ENCODE measurements at regions of chr13 and their contacts with region 1.

Region 1: DNA sequence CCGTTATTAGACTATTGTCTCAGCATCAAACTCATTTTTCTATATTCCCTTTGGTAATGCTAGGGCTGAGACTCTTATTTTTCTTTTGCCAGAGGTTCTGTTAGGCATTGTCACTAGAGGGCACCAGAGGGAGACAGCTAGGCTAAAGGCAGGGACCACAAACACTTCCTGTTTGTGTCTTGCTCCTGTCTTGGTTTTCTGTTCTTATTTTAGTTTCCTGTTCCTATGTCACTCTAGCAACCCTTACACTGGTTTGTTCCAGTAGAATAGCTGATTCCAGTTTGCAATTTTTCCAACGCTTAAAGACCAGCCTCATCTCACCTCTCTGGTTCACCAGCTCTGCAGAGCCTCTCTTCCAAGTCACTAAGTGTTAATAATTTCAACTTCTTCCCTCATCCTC is 772.0 kb downstream of the DIAPH3 start:
- DNase-seq: peak; percentile 39
- ATAC-seq: peak; percentile 87
- H3K4me3 ChIP-seq: no peak overlapping the region
- H3K27ac ChIP-seq: no peak overlapping the region
- H3K4me1 ChIP-seq: no peaks in the 10 kb centered on the region
- H3K27me3 ChIP-seq: no peaks in the 10 kb centered on the region
- CTCF ChIP-seq: peak; percentile 75
- EP300 ChIP-seq: no peak
- POLR2A ChIP-seq: no peak
- RAD21 ChIP-seq: no peak

Region 2: GRCh38 chr13:59337070-59337469 is 54.6 kb before region 1 on chr13:
- CTCF ChIA-PET with region 1: no interaction called
- POLR2A ChIA-PET with region 1: no interaction called
- in situ Hi-C with region 1: no loop called
- intact Hi-C with region 1: no loop called
- DNase-seq: no peak
- ATAC-seq: no peak
- H3K4me3 ChIP-seq: no peak overlapping the region
- H3K27ac ChIP-seq: no peak overlapping the region
- H3K4me1 ChIP-seq: no peaks in the 10 kb centered on the region
- H3K27me3 ChIP-seq: no peaks in the 10 kb centered on the region
- CTCF ChIP-seq: no peak
- EP300 ChIP-seq: no peak
- POLR2A ChIP-seq: no peak
- RAD21 ChIP-seq: no peak

Region 3: GRCh38 chr13:59409211-59409610 is 17.5 kb after region 1 on chr13:
- CTCF ChIA-PET with region 1: no interaction called
- POLR2A ChIA-PET with region 1: no interaction called
- in situ Hi-C with region 1: no loop called
- intact Hi-C with region 1: no loop called
- DNase-seq: no peak
- ATAC-seq: no peak
- H3K4me3 ChIP-seq: no peak overlapping the region
- H3K27ac ChIP-seq: no peak overlapping the region
- H3K4me1 ChIP-seq: no peaks in the 10 kb centered on the region
- H3K27me3 ChIP-seq: no peaks in the 10 kb centered on the region; a peak in 1 of 5 replicates
- CTCF ChIP-seq: no peak
- EP300 ChIP-seq: no peak
- POLR2A ChIP-seq: no peak
- RAD21 ChIP-seq: no peak

Region 4: GRCh38 chr13:59435024-59435423 is 43.3 kb after region 1 on chr13:
- CTCF ChIA-PET with region 1: no interaction called
- POLR2A ChIA-PET with region 1: no interaction called
- in situ Hi-C with region 1: no loop called
- intact Hi-C with region 1: no loop called
- DNase-seq: no peak
- ATAC-seq: no peak
- H3K4me3 ChIP-seq: no peak overlapping the region
- H3K27ac ChIP-seq: no peak overlapping the region
- H3K4me1 ChIP-seq: no peaks in the 10 kb centered on the region
- H3K27me3 ChIP-seq: no peaks in the 10 kb centered on the region
- CTCF ChIP-seq: no peak
- EP300 ChIP-seq: no peak
- POLR2A ChIP-seq: no peak
- RAD21 ChIP-seq: no peak

Region 5: DNA sequence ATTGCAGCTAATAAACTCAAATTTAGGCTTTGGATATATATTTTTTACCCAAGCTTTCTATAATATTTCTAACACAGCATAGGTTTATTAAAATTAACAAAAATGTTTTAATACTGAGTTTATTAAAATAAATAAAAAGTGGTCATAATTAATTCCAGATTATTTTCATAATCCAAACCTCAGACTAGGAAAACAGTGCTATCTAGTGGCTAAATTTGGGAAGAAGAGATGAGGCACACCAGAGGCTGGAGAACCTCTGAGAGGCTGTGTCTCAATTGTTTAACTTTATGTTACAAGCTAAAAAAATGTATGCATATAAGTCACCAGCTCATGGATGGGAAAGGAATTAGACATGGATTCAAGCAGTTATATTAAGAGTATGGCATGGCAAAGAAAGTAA is 379.6 kb after region 1 on chr13:
- CTCF ChIA-PET with region 1: no interaction called
- POLR2A ChIA-PET with region 1: no interaction called
- in situ Hi-C with region 1: no loop called
- intact Hi-C with region 1: loop called (anchors 10 kb)
- DNase-seq: peak; percentile 4
- ATAC-seq: no peak
- H3K4me3 ChIP-seq: no peak overlapping the region
- H3K27ac ChIP-seq: no peak overlapping the region
- H3K4me1 ChIP-seq: no peaks in the 10 kb centered on the region; the same call in 1 of the 2 replicates
- H3K27me3 ChIP-seq: no peaks in the 10 kb centered on the region
- CTCF ChIP-seq: peak; percentile 57
- EP300 ChIP-seq: no peak
- POLR2A ChIP-seq: no peak
- RAD21 ChIP-seq: no peak

Region 6: DNA sequence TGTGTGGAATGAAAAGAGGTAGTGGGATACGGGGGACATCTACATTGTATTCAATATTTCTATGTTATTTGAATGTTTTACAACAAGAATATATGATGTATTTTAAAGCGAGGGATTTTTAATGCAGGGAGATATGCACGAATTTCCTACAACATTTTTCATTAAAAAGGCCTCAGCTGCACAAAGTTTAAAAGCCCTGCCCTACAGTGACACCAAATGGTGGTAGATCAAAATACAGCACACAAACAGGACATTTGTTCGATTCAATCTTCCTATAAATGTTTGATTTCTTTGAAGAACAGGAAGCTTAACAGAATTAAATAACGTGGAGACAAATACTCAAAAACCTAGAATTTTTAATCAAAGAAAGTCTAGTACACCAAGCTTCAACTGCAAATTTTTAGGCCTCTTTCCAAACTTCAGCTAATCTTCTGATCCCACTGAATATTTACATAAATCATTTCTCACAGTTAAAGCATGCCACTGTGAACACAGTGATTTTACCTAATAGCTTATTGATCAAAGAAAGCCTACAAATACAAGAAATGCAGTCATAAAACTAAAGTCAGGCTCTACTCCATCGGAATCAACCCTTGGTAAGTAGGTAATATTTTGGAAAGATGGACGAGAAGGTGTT is 514.8 kb after region 1 on chr13:
- CTCF ChIA-PET with region 1: no interaction called
- POLR2A ChIA-PET with region 1: no interaction called
- in situ Hi-C with region 1: no loop called
- intact Hi-C with region 1: loop called (anchors 1 kb)
- DNase-seq: peak; percentile 1
- ATAC-seq: peak; percentile 47; the same call in 2 of the 3 replicates
- H3K4me3 ChIP-seq: no peak overlapping the region
- H3K27ac ChIP-seq: no peak overlapping the region
- H3K4me1 ChIP-seq: no peaks in the 10 kb centered on the region
- H3K27me3 ChIP-seq: no peaks in the 10 kb centered on the region
- CTCF ChIP-seq: peak; percentile 60
- EP300 ChIP-seq: no peak
- POLR2A ChIP-seq: no peak
- RAD21 ChIP-seq: 0 out of 2 replicates have a peak, but pooled peaks have one; percentile 18

Region 7: DNA sequence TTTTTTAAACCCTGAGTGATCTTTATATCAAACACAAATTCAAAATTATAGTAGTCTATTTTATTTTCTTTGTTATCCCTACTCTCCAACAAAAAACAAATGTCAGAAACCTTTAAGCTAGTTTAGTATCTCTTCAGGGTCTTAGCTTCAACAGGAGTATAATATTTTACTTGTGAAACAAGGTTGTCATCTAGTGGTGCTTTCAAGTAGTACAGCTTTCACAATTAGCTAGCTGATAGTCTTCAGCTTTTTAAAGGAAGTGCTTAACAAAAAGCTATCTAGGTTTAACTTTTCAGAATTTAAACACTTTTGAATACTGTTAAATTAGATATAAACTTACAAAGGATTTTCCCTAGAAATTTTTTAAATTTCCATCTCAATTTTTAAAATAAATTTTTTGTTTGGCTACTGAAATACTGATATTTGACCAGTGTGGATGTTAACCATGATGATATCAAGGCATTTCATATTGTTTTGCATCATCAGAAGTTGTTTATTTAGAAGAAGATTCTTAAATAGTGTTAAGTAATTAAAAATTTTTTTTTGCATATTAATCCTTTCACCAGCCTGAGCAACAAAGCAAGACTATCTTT is 1039.5 kb after region 1 on chr13:
- CTCF ChIA-PET with region 1: no interaction called
- POLR2A ChIA-PET with region 1: no interaction called
- in situ Hi-C with region 1: no loop called
- intact Hi-C with region 1: loop called (anchors 10 kb)
- DNase-seq: peak; percentile 47
- ATAC-seq: peak; percentile 80
- H3K4me3 ChIP-seq: no peak overlapping the region
- H3K27ac ChIP-seq: no peak overlapping the region
- H3K4me1 ChIP-seq: no peaks in the 10 kb centered on the region
- H3K27me3 ChIP-seq: no peaks in the 10 kb centered on the region
- CTCF ChIP-seq: peak; percentile 72
- EP300 ChIP-seq: no peak
- POLR2A ChIP-seq: no peak
- RAD21 ChIP-seq: peak; percentile 58; the same call in 1 of the 2 replicates

Measured in HepG2 (cell line).